Calu3 (cell line): ENCODE measurements at regions of chr9 and their contacts with region 1.

Region 1: GRCh38 chr9:95048225-95049087 is 269.1 kb downstream of the FANCC start:
- DNase-seq: peak; percentile 84
- H3K4me3 Mint-ChIP-seq: peak overlapping the region; percentile 75
- H3K27ac Mint-ChIP-seq: peak overlapping the region; percentile 91
- H3K4me1 Mint-ChIP-seq: peaks cover 12% of the 10 kb centered on the region
- H3K27me3 Mint-ChIP-seq: no peaks in the 10 kb centered on the region
- CTCF ChIP-seq: no peak

Region 2: DNA sequence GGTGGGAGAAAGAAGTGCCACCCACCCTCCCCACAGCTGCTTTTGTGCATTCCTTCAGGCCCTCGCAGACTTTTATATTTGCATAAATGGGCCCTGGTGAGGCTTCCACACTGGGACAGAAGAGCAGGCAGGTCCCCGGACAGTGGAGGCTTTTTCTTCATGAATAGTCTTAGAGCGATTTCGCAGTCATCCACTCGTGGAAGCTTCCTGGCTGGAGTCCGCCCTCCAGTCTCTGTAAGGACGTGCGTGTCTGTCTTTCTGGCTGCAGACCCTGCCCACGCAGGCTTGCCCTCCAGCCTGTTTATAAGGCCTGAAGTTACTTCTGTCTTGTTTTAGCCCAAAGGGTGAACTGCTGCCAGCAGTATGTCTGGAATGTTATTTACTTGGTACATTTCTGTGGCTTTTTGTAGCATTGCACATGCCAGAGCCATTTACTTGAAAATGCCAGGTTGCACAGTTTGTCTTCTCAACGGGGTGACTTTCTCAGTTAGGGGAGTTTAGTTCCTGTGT is 126.3 kb before region 1 on chr9:
- CTCF ChIA-PET with region 1: interaction called, 3 read pairs
- intact Hi-C with region 1: loop called (anchors 5 kb)
- DNase-seq: peak; percentile 53
- H3K4me3 Mint-ChIP-seq: peak overlapping the region; percentile 56
- H3K27ac Mint-ChIP-seq: peak overlapping the region; percentile 88
- H3K4me1 Mint-ChIP-seq: peaks cover 85% of the 10 kb centered on the region
- H3K27me3 Mint-ChIP-seq: no peaks in the 10 kb centered on the region
- CTCF ChIP-seq: no peak

Region 3: DNA sequence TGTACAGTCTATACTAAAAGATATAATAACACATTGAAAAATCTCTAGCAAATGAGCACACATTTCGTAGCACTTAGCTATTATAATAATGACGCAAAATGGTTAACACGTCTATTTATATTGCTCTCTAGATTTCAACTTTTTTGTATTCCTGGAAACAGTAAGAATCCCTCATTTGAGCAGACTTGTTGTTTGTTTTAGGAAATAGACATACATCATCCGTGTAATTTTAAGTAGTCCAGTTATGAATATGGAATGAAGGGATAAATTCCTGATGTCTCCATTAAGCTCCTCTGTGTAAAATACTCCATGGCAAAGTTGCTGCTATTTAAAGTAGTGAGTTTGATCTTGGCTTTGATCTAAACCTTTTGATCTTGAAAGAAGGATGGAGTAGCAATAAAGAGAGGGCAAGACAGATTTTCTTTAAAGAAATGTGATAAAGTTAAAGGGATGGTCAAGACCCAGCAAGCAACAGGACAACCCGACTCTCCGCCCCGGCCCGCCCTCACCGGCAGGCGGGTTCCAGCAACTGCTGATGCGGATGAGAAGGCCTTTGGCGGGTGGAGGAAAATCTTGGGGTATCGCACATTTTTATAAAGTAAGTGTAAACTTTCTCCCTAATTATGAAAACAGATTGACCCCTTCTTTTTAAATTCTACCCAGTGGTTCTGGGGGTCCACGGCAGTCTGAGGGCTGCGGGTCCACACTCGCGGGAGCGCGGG is 44.6 kb before region 1 on chr9:
- CTCF ChIA-PET with region 1: no interaction called
- intact Hi-C with region 1: loop called (anchors 2 kb)
- DNase-seq: peak; percentile 58
- H3K4me3 Mint-ChIP-seq: peak overlapping the region; percentile 81
- H3K27ac Mint-ChIP-seq: peak overlapping the region; percentile 36
- H3K4me1 Mint-ChIP-seq: peaks cover 11% of the 10 kb centered on the region
- H3K27me3 Mint-ChIP-seq: no peaks in the 10 kb centered on the region
- CTCF ChIP-seq: no peak